GM12878 (cell line): ENCODE measurements at regions of chr4 and their contacts with region 1.

Region 1: GRCh38 chr4:127782274-127783025 is at the start of gene HSPA4L:
- DNase-seq: peak; percentile 49
- ATAC-seq: peak; percentile 54
- H3K4me3 ChIP-seq: peak within 1 kb of the TSS; percentile 96
- H3K27ac ChIP-seq: peak within 1 kb of the TSS; percentile 90
- H3K4me1 ChIP-seq: peaks cover 11% of the 10 kb centered on the region
- H3K27me3 ChIP-seq: no peaks in the 10 kb centered on the region
- CTCF ChIP-seq: peak in 2 of 3 experiments; percentile 14 to 24; a peak in 2 of 6 replicates
- EP300 ChIP-seq: peak in 1 of 2 experiments; percentile 39; a peak in 1 of 4 replicates
- POLR2A ChIP-seq: peak; percentile 80
- RAD21 ChIP-seq: peak; percentile 3; the same call in 1 of the 2 replicates
- polyA plus RNA-seq, gene HSPA4L: 8.6 to 12.8 TPM

Region 2: GRCh38 chr4:127698789-127699200 is 83.7 kb before region 1 on chr4:
- CTCF ChIA-PET with region 1: no interaction called
- POLR2A ChIA-PET with region 1: no interaction called
- RAD21 ChIA-PET with region 1: no interaction called
- SMC1A ChIA-PET with region 1: no interaction called
- in situ Hi-C with region 1: no loop called
- intact Hi-C with region 1: loop called (anchors 2 kb)
- DNase-seq: peak; percentile 83
- ATAC-seq: peak; percentile 100
- H3K4me3 ChIP-seq: no peak overlapping the region
- H3K27ac ChIP-seq: no peak overlapping the region
- H3K4me1 ChIP-seq: peaks cover 3% of the 10 kb centered on the region; the same call in 1 of the 2 replicates
- H3K27me3 ChIP-seq: no peaks in the 10 kb centered on the region
- CTCF ChIP-seq: no peak
- EP300 ChIP-seq: peak; percentile 82 to 97
- POLR2A ChIP-seq: no peak
- RAD21 ChIP-seq: no peak

Region 3: DNA sequence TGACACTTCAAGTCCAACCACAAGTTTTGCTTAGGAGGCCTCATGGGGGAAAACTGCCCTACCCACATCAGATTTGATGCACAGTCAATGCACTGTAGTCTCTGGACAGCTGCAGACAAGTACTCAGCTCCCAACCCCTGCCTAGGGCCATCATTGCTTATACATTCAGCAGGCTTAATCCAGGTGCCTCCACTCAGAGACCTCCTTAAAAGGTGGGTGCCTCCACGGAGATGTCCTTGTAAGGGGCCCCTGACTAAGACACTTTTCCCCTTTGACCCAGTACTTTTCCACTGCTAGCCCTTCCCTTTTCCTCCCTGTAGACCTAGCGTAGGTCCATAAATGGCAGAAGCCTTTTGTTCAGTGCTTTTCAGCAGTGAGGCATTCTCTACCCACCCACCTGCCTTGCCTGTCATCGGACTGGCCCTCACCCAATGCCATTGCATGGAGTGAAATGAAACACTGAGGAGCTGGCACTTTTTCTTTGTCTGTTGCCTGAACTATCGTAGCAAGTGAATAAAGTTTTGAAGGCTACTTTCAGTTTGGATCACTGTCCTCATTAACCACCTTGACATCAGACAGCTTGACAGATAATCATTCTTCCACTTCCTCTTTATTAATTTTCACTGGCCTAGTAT is 74.5 kb after region 1 on chr4:
- CTCF ChIA-PET with region 1: no interaction called
- POLR2A ChIA-PET with region 1: interaction called, 3 read pairs
- RAD21 ChIA-PET with region 1: interaction called, 3 read pairs
- SMC1A ChIA-PET with region 1: no interaction called
- in situ Hi-C with region 1: no loop called
- intact Hi-C with region 1: loop called (anchors 2 kb)
- DNase-seq: peak; percentile 60
- ATAC-seq: peak; percentile 96
- H3K4me3 ChIP-seq: peak overlapping the region; percentile 59
- H3K27ac ChIP-seq: peak overlapping the region; percentile 84
- H3K4me1 ChIP-seq: peaks cover 15% of the 10 kb centered on the region
- H3K27me3 ChIP-seq: no peaks in the 10 kb centered on the region
- CTCF ChIP-seq: no peak
- EP300 ChIP-seq: peak; percentile 71 to 85; a peak in 2 of 4 replicates
- POLR2A ChIP-seq: peak; percentile 71
- RAD21 ChIP-seq: no peak

Region 4: DNA sequence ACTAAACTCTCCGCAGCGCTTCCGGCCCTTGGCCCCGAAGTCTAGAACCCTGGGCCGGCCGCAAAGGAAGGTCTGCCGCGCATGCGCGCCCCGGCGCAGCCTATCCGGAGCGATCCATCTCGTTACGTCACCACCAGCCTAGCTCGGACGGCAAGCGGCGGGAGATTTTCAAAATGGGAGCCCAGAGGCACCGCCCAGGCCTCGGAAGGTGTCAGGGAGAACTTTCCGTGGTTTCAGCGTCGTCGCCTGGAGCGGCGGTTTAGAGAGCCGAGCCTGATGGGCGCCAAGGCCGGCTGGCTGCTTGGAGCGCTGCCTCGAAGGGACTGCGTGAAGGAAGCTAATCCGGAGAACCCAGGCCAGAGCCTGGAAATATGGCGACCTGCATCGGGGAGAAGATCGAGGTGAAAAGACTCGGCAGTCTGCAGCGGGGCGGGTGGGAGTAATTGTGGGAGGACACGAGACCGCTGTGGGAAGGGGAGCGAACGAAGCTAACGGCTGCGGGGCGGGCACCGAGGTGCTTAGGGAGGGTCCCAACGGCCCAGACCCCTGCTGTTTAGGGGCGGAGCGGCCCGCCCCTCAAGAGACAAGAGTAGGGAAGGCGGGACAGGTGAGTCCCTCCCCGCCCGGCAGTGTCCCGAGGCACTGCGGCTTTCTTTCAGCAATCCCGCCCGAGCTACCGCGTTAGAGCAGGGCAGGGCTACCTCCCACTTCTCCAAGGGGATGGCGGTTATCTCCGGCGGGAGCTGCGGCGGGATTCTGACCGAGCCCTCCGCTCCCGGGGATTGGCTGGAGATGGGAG is 98.5 kb after region 1 on chr4 and contains the start of gene PLK4:
- CTCF ChIA-PET with region 1: no interaction called
- POLR2A ChIA-PET with region 1: interaction called, 3 read pairs
- RAD21 ChIA-PET with region 1: interaction called, 4 read pairs
- SMC1A ChIA-PET with region 1: interaction called, 4 read pairs
- in situ Hi-C with region 1: no loop called
- intact Hi-C with region 1: loop called (anchors 2 kb)
- DNase-seq: peak; percentile 90
- ATAC-seq: peak; percentile 93
- H3K4me3 ChIP-seq: peak within 1 kb of the TSS; percentile 94
- H3K27ac ChIP-seq: peak within 1 kb of the TSS; percentile 93
- H3K4me1 ChIP-seq: no peaks in the 10 kb centered on the region; the same call in 1 of the 2 replicates
- H3K27me3 ChIP-seq: no peaks in the 10 kb centered on the region
- CTCF ChIP-seq: no peak
- EP300 ChIP-seq: 0 out of 4 replicates have a peak, but pooled peaks of 1 of the 2 experiments have one; percentile 44
- POLR2A ChIP-seq: peak; percentile 86
- RAD21 ChIP-seq: no peak
- polyA plus RNA-seq, gene PLK4: 16.6 to 17.5 TPM

Region 5: DNA sequence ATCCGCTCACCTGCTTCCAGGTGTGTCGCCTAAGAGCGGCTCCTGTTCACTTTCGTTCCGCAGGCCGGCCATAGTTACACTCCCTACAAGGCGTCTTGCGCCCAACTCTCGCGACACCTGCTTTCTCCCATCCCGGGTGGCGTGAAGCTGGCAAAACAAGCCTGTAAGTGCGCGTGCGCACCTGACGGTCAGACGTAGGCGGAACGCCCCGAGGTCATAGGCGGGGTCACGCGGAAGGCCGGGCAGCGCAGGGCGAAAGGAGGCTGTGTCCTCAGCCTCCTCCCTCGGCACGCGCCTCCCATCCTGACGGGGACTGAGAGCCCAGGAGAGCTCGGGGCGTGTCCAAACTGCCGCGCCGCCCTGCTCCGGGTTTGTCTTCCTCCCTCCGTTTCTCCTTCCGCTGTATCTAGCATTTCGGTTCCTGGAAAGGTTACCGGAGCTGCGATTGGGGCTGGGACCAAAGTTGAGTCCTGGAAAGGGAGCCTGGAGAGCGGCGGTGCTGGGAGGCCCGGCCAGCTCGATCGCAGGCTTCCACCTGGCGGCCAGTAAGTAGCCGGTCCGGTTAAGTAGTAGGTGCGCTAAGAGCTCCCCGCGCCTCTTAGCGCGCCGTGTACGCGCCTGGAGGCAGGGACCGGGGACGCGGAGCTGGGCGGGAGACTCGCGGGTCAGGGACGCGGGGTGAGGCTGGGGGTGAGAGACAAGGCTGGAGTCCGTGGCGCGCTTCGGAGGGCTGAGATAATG is 182.8 kb after region 1 on chr4 and contains the starts of genes ABHD18 and MFSD8:
- CTCF ChIA-PET with region 1: interaction called, 6 read pairs
- POLR2A ChIA-PET with region 1: interaction called, 7 read pairs
- RAD21 ChIA-PET with region 1: interaction called, 10 read pairs
- SMC1A ChIA-PET with region 1: interaction called, 6 read pairs
- in situ Hi-C with region 1: no loop called
- intact Hi-C with region 1: loop called (anchors 2 kb)
- DNase-seq: peak; percentile 99
- ATAC-seq: peak; percentile 96
- H3K4me3 ChIP-seq: peak within 1 kb of the TSS; percentile 83
- H3K27ac ChIP-seq: peak within 1 kb of the TSS; percentile 89
- H3K4me1 ChIP-seq: peaks cover 5% of the 10 kb centered on the region; the same call in 1 of the 2 replicates
- H3K27me3 ChIP-seq: no peaks in the 10 kb centered on the region
- CTCF ChIP-seq: peak; percentile 38 to 40 (median 39); a peak in 4 of 6 replicates
- EP300 ChIP-seq: 0 out of 4 replicates have a peak, but pooled peaks of 1 of the 2 experiments have one; percentile 9
- POLR2A ChIP-seq: peak; percentile 88
- RAD21 ChIP-seq: 0 out of 2 replicates have a peak, but pooled peaks have one; percentile 15
- polyA plus RNA-seq, gene ABHD18: 3.4 to 3.5 TPM
- polyA plus RNA-seq, gene MFSD8: 18.2 to 29.9 TPM

Region 6: GRCh38 chr4:127975121-127975770 is 192.8 kb after region 1 on chr4:
- CTCF ChIA-PET with region 1: no interaction called
- POLR2A ChIA-PET with region 1: interaction called, 11 read pairs
- RAD21 ChIA-PET with region 1: interaction called, 3 read pairs
- SMC1A ChIA-PET with region 1: no interaction called
- in situ Hi-C with region 1: no loop called
- intact Hi-C with region 1: no loop called
- DNase-seq: no peak
- ATAC-seq: no peak
- H3K4me3 ChIP-seq: no peak overlapping the region
- H3K27ac ChIP-seq: no peak overlapping the region
- H3K4me1 ChIP-seq: no peaks in the 10 kb centered on the region
- H3K27me3 ChIP-seq: no peaks in the 10 kb centered on the region
- CTCF ChIP-seq: no peak
- EP300 ChIP-seq: no peak
- POLR2A ChIP-seq: no peak
- RAD21 ChIP-seq: no peak

Region 7: GRCh38 chr4:128060699-128061565 is 278.5 kb after region 1 on chr4 and contains the start of gene LARP1B:
- CTCF ChIA-PET with region 1: no interaction called
- POLR2A ChIA-PET with region 1: interaction called, 12 read pairs
- RAD21 ChIA-PET with region 1: interaction called, 3 read pairs
- SMC1A ChIA-PET with region 1: no interaction called
- in situ Hi-C with region 1: no loop called
- intact Hi-C with region 1: loop called (anchors 5 kb)
- DNase-seq: peak; percentile 74
- ATAC-seq: peak; percentile 91
- H3K4me3 ChIP-seq: peak within 1 kb of the TSS; percentile 92
- H3K27ac ChIP-seq: peak within 1 kb of the TSS; percentile 88
- H3K4me1 ChIP-seq: no peaks in the 10 kb centered on the region
- H3K27me3 ChIP-seq: no peaks in the 10 kb centered on the region
- CTCF ChIP-seq: no peak
- EP300 ChIP-seq: no peak
- POLR2A ChIP-seq: peak; percentile 93
- RAD21 ChIP-seq: no peak
- polyA plus RNA-seq, gene LARP1B: 9.3 to 12.7 TPM